HEK293 (cell line): ENCODE measurements at regions of chr2 and their contacts with region 1.

Region 1: GRCh38 chr2:230007931-230008707 is 60.6 kb downstream of the SLC16A14 start:
- H3K4me3 ChIP-seq: no peak overlapping the region
- H3K27ac ChIP-seq: no peak overlapping the region
- H3K4me1 ChIP-seq: no peaks in the 10 kb centered on the region
- CTCF ChIP-seq: 0 out of 2 replicates have a peak, but pooled peaks have one; percentile 50

Region 2: GRCh38 chr2:229980431-229981184 is 27.5 kb before region 1 on chr2:
- CTCF ChIA-PET with region 1: no interaction called
- POLR2A ChIA-PET with region 1: no interaction called
- H3K4me3 ChIP-seq: no peak overlapping the region
- H3K27ac ChIP-seq: no peak overlapping the region
- H3K4me1 ChIP-seq: no peaks in the 10 kb centered on the region
- CTCF ChIP-seq: no peak

Region 3: DNA sequence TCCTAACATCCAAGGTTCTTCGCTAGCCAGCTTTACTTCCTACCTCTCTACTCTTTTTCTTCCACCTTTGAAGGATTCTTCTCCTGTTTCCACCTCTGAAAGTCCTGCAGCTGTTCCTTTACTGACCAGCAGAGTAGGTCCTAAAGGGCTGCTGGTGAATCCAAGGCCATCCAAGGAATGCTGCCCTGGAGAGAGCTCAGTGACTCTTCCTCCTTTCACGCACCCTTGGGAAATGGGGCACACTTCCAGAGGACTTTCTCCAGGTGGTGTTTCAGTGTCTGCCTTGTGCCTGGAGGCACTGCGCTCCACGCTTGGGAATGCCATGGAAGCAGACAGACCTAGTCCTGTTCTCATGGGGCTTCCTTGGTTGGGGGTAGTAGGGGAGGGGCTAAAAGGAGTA is 15.2 kb after region 1 on chr2:
- CTCF ChIA-PET with region 1: interaction called, 21 read pairs
- POLR2A ChIA-PET with region 1: no interaction called
- H3K4me3 ChIP-seq: no peak overlapping the region
- H3K27ac ChIP-seq: no peak overlapping the region
- H3K4me1 ChIP-seq: no peaks in the 10 kb centered on the region
- CTCF ChIP-seq: no peak

Region 4: DNA sequence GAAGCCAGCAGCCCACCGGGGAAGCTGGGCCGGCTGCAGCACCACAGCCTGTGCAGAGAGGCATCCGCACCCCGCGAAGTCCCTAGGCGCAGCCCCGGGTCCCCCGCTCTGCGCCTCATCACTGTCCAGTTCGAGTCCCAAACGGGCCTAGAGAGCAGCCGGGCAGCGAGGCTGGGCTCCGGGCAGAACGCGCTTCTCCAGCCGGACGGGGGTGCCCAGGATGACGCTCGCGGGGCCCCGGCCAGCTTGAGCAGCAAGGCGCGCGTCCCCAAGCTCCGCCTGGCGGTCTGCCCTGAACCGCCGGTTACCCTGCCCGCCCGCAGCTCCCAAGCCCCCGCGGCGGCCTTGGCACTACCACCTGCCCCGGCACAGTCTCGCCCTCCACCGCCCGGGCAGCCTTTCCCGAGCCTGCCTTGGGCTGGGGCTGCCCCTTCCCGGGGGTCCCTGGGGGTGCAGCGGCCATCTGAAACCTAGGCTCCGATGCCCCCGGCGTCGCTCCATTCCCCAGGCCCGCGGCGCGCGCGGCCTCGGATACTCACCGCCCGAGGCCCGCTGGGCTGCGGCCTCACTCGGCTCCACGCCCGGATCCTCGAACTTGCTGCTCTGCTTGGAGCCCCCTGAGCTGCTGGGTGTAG is 60.0 kb after region 1 on chr2:
- CTCF ChIA-PET with region 1: interaction called, 12 read pairs
- POLR2A ChIA-PET with region 1: no interaction called
- H3K4me3 ChIP-seq: peak overlapping the region; percentile 76
- H3K27ac ChIP-seq: peak overlapping the region; percentile 76; the same call in 1 of the 2 replicates
- H3K4me1 ChIP-seq: no peaks in the 10 kb centered on the region
- CTCF ChIP-seq: peak; percentile 87

Region 5: DNA sequence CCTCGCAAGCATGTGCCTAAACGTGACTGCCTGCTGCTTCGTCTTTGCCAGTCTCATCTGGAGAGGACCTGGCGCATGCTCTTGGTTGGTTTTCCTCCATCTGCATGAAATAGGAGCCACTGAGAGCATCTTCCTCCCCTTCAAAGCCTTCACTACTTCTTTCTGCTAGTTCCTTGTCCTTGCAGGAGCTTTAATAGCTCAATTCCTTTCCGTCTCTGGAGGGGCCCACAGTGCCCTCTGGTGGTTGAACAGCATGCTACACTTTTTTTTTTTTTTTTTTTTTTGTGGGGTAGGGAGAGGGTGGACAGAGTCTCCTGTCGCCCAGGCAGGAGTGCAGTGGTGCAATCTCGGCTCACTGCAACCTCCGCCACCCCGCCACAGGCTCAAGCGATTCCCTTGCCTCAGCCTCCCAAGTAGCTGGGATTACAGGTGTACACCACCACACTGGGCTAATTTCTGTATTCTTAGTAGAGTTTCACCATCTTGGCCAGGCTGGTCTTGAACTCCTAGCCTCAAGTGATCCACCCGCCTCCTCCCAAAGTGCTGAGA is 152.1 kb after region 1 on chr2:
- CTCF ChIA-PET with region 1: interaction called, 38 read pairs
- POLR2A ChIA-PET with region 1: no interaction called
- H3K4me3 ChIP-seq: no peak overlapping the region
- H3K27ac ChIP-seq: no peak overlapping the region
- H3K4me1 ChIP-seq: no peaks in the 10 kb centered on the region
- CTCF ChIP-seq: peak; percentile 51; the same call in 1 of the 2 replicates

Region 6: GRCh38 chr2:230209422-230210051 is 201.4 kb after region 1 on chr2:
- CTCF ChIA-PET with region 1: no interaction called
- POLR2A ChIA-PET with region 1: no interaction called
- H3K4me3 ChIP-seq: no peak overlapping the region
- H3K27ac ChIP-seq: no peak overlapping the region
- H3K4me1 ChIP-seq: no peaks in the 10 kb centered on the region
- CTCF ChIP-seq: no peak